Astrocyte of the cerebellum (primary cell): ENCODE measurements at regions of chr4 and their contacts with region 1.

Region 1: DNA sequence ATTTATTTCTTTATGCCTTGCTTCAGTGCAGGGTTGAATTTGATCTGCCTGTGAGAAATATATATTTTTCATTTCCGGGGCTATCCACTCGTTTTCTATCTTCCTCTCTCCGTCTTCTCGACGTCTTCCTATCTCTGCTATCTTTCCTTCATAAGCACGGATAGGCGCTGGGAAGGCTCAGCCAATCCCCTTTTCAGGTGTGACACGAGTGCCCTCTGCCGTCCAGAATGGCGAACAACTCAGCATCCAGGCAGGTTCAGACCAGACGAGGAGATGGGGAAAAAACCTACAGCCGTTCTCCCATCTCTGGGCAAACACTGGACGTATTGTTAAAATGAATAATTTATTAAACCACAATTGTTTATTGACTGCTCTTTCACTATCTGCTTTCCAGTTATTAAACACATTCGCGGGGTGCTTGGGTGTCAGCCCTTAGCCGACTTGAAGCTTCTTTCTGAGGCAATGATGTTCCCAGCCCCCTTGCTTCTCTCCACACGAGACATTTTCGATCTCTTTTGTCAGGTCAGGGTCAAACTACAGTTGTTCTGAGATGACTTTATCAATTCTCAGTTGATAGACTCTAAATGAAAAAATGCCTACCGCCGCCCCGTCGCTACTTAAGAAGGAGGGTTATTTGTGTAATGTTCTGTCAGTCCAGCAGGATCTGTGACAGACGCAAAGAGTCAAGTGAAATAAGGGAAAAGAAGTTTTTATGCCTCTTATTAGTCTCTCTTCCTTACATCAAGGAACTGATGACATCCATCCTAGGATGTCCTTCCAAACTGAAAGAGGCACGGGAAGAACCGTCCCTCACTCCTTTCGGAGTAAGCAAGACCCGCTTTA is 96.3 kb upstream of the NOCT start:
- DNase-seq: peak; percentile 60
- H3K4me3 ChIP-seq: no peak overlapping the region
- CTCF ChIP-seq: peak; percentile 77

Region 2: DNA sequence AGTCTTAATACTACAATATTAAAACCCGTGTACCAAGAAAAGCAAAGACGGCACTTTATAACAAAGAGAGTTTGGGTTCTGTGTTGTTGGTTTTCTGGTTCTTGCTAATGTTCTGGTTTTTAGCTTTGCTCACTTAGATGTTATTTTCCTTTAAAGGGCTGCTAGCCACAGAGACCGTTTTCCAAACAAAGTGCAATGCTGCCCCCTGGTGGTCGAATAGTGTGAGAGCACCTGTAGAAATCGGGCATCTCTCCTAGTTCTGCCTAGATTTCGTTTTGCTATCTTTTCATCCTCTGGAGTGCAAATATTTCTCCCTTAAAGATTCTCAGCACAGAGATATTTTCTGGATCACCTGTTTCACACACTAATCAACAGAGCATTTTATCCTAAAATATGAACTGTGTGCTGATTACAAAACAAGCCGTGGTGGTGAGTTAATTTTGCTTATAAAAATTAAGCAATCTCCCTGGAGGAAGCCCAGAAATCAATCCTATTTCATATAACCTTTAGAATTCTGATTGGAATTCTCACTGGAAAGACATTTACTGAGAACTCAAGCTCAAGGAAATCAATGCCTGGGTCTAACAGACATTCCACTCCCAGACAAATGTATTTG is 238.2 kb before region 1 on chr4:
- in situ Hi-C with region 1: loop called (anchors 25 kb)
- DNase-seq: peak; percentile 74
- H3K4me3 ChIP-seq: no peak overlapping the region
- CTCF ChIP-seq: peak; percentile 75

Region 3: DNA sequence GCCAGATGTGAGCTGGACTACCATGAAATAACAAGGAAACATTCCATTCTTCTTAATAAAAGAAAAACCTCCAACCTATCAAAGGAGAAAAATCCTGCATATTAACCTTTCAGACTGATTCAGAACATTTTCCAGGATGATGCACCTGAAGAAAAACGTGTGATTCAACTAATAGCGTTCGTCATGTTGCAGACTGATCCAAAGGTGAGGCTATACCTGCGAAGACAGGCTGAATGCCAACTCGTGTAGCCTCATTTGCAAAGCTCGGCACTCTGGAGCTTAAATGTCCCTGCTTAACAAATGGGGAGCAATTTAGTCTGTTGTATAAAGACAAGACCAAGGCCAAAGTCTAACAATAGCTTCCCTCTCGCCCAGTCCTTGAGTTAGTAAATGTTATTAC is 75.7 kb before region 1 on chr4:
- in situ Hi-C with region 1: loop called (anchors 5 kb)
- DNase-seq: no peak
- H3K4me3 ChIP-seq: no peak overlapping the region
- CTCF ChIP-seq: no peak